CD4-positive, alpha-beta memory T cell (primary cell): ENCODE measurements at regions of chr11 and their contacts with region 1.

Region 1: GRCh38 chr11:32960553-32961164 is 55.0 kb upstream of the DEPDC7 start:
- DNase-seq: peak in 4 of 5 donors; percentile 40 to 57 (median 54)
- H3K4me3 ChIP-seq: no peak overlapping the region
- H3K4me3 Mint-ChIP-seq: no peak overlapping the region
- H3K27ac ChIP-seq: no peak overlapping the region
- H3K27ac Mint-ChIP-seq: no peak overlapping the region
- H3K4me1 ChIP-seq: no peaks in the 10 kb centered on the region
- H3K4me1 Mint-ChIP-seq: peaks cover 0 to under 1% (median 0%) of the 10 kb centered on the region in 4 donors
- H3K27me3 ChIP-seq: no peaks in the 10 kb centered on the region
- H3K27me3 Mint-ChIP-seq: no peaks in the 10 kb centered on the region

Region 2: DNA sequence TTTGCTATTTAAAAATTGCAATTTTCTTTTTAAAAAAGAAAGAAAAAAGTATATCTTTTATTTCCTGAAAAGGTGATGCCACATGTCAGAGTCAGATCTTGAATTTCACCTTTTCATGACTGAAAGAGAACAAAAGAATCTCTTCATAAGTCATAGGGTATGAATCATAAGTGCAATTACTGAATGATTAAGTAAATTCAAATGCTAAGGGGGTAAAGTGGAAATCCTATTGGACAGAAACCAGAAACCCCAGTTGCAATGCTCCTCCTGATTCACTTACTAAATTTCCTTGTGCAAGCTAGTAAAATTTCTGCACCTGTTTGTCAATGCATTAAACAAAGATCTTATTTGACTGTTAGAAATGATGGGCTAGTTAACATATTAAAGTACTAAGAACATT is 139.1 kb before region 1 on chr11:
- CTCF ChIA-PET with region 1: no interaction called
- POLR2A ChIA-PET with region 1: no interaction called
- intact Hi-C with region 1: no loop called
- DNase-seq: no peak
- H3K4me3 ChIP-seq: no peak overlapping the region
- H3K4me3 Mint-ChIP-seq: no peak overlapping the region
- H3K27ac ChIP-seq: no peak overlapping the region
- H3K27ac Mint-ChIP-seq: no peak overlapping the region
- H3K4me1 ChIP-seq: no peaks in the 10 kb centered on the region
- H3K4me1 Mint-ChIP-seq: no peaks in the 10 kb centered on the region
- H3K27me3 ChIP-seq: no peaks in the 10 kb centered on the region
- H3K27me3 Mint-ChIP-seq: peaks cover 1 to 7% of the 10 kb centered on the region in 2 donors

Region 3: DNA sequence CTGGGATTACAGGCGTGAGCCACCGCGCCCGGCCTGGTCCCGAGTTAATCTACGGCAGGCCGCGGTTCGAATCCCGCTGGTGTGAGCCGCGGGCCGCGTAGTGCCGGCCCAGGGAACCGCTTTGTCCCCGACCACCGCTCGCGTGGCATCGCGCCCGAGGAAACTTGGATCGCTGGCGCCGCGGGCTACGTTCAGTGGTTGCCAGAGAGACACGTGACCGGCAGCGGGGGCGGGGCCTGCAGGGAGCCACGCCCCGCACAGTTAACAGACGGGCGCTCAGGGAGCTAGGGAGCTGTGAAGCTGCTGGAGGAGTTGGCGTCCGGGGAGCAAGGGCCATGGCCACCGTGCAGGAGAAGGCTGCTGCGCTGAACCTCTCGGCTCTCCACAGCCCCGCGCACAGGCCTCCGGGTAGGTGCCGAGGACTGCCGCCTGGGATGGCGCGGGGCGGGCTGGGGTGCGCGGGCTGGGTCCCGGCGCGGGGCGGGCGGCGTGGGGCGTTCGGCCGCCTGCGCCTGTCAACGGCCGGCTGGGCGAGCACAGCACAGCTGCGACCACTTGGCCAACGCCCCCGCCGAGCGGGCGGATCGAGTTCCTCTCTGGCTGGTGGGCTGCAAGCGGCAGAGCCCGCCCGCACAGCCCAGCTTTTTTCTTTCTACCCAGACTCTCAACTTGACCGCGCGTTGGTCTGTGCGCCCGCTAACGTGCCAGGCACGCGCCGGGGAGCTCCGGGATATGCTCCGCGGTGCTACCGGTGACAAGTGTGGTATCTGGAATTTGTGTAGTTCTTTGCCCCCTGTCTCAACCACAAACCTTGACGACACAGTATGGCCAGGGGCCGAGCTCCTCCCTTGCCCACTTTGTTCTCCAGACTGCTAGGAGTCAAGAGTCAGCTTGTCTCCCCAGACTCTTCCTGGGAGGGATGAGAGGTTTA is 55.2 kb after region 1 on chr11 and contains the start of gene DEPDC7:
- CTCF ChIA-PET with region 1: no interaction called
- POLR2A ChIA-PET with region 1: no interaction called
- intact Hi-C with region 1: loop called (anchors 10 kb)
- DNase-seq: peak; percentile 66 to 73 (median 69)
- H3K4me3 ChIP-seq: peak within 1 kb of the TSS; percentile 43 to 49
- H3K4me3 Mint-ChIP-seq: peak within 1 kb of the TSS; percentile 82 to 88 (median 86)
- H3K27ac ChIP-seq: no peak within 1 kb of the TSS
- H3K27ac Mint-ChIP-seq: peak within 1 kb of the TSS in 3 of 7 donors; percentile 8 to 66 (median 25)
- H3K4me1 ChIP-seq: peaks cover 25% of the 10 kb centered on the region
- H3K4me1 Mint-ChIP-seq: peaks cover 14 to 42% (median 25%) of the 10 kb centered on the region in 4 donors
- H3K27me3 ChIP-seq: peaks cover 3% of the 10 kb centered on the region
- H3K27me3 Mint-ChIP-seq: peaks cover 9 to 19% of the 10 kb centered on the region in 2 donors
- total RNA-seq, gene DEPDC7: 1.4 to 1.9 TPM

Region 4: DNA sequence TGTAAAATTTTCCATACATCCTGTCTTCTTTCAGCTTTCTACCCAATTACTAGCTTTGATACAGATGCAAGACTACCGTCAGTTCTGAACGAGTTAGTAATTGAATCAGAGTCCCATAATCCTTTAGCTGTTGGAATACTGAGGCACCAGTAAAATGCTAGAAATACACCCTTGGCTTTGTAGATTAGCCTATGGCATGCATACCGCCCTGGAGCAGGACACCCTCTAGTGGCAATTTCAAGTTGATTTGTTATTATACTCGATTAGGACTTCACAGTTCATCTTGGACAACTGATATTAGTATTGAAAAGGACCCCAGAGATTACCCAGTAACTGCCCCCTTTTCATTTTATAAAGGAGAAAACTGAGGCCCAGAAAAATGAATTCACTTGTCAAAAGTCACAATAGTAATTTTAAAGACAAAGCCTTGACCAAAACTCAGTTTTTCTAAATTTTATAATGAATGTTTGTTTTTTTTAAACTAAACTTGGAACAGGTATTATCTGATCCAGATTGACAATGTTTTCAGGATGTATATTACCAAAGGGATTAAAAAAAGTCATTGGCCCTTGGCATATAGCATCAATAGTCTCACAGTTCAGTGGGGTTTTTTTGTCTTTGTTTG is 369.2 kb after region 1 on chr11:
- CTCF ChIA-PET with region 1: interaction called, 4 read pairs
- POLR2A ChIA-PET with region 1: no interaction called
- intact Hi-C with region 1: loop called (anchors 1 kb)
- DNase-seq: peak; percentile 47 to 56 (median 49)
- H3K4me3 ChIP-seq: no peak overlapping the region
- H3K4me3 Mint-ChIP-seq: no peak overlapping the region
- H3K27ac ChIP-seq: no peak overlapping the region
- H3K27ac Mint-ChIP-seq: peak overlapping the region in 4 of 7 donors; percentile 31 to 73 (median 54)
- H3K4me1 ChIP-seq: peaks cover under 1% of the 10 kb centered on the region
- H3K4me1 Mint-ChIP-seq: peaks cover 17 to 33% (median 24%) of the 10 kb centered on the region in 4 donors
- H3K27me3 ChIP-seq: no peaks in the 10 kb centered on the region
- H3K27me3 Mint-ChIP-seq: no peaks in the 10 kb centered on the region

Region 5: GRCh38 chr11:33829433-33830141 is 868.9 kb after region 1 on chr11:
- CTCF ChIA-PET with region 1: no interaction called
- POLR2A ChIA-PET with region 1: no interaction called
- intact Hi-C with region 1: loop called (anchors 10 kb)
- DNase-seq: peak; percentile 50 to 62 (median 53)
- H3K4me3 ChIP-seq: no peak overlapping the region
- H3K4me3 Mint-ChIP-seq: peak overlapping the region; percentile 34 to 88 (median 81)
- H3K27ac ChIP-seq: no peak overlapping the region
- H3K27ac Mint-ChIP-seq: no peak overlapping the region
- H3K4me1 ChIP-seq: peaks cover 5% of the 10 kb centered on the region
- H3K4me1 Mint-ChIP-seq: peaks cover 3 to 8% (median 6%) of the 10 kb centered on the region in 4 donors
- H3K27me3 ChIP-seq: peaks cover 19% of the 10 kb centered on the region
- H3K27me3 Mint-ChIP-seq: peaks cover 46 to 48% of the 10 kb centered on the region in 2 donors